ENCODE measurements at regions of chr7 and their contacts with region 1.

Region 1: GRCh38 chr7:80699045-80699638 is 60.7 kb downstream of the CD36 start:
- DNase-seq: no peak
- H3K4me3 ChIP-seq: no peak overlapping the region
- H3K27ac ChIP-seq: no peak overlapping the region
- H3K4me1 ChIP-seq: no peaks in the 10 kb centered on the region
- H3K27me3 ChIP-seq: no peaks in the 10 kb centered on the region
- CTCF ChIP-seq: peak in 3 of 4 experiments; percentile 70 to 85 (median 82)
- POLR2A ChIP-seq: no peak

Region 2: GRCh38 chr7:81256991-81257390 is 557.8 kb after region 1 on chr7:
- intact Hi-C with region 1: loop called (anchors 2 kb)
- DNase-seq: no peak
- H3K4me3 ChIP-seq: no peak overlapping the region
- H3K27ac ChIP-seq: no peak overlapping the region
- H3K4me1 ChIP-seq: no peaks in the 10 kb centered on the region
- H3K27me3 ChIP-seq: no peaks in the 10 kb centered on the region
- CTCF ChIP-seq: no peak
- POLR2A ChIP-seq: no peak

Region 3: DNA sequence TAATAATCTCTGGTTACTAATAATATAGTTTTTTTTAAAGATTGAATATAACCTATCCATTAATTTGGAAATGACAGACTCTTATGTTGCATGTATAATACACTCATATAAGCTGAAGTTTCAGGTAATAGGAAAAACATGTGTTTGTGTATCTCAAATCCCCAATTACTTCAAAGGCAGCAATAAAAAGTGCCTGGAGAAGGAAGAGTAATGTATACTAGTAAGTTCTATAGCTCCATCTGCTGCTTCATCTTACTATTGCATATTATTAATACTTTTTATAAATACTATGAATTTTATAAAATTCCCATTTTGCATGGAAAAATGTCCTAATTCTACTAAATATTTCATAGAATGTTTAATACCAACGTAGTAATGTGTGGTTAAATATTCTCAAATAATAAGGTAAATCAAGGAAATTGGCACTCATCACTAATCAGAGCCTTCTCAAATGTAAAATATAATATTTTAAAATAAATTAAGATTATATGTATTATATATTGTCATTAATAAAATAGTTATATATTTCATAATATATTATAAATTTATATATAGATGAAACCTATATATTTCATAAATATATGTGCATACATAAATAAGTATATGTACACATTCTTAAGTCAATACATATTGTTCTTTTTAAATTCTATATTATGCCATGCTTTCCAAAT is 758.8 kb after region 1 on chr7:
- intact Hi-C with region 1: loop called (anchors 5 kb)
- DNase-seq: no peak
- H3K4me3 ChIP-seq: no peak overlapping the region
- H3K27ac ChIP-seq: no peak overlapping the region
- H3K4me1 ChIP-seq: no peaks in the 10 kb centered on the region
- H3K27me3 ChIP-seq: no peaks in the 10 kb centered on the region
- CTCF ChIP-seq: peak in 3 of 4 experiments; percentile 35 to 56 (median 52)
- POLR2A ChIP-seq: no peak

Region 4: GRCh38 chr7:81469869-81470723 is 771.0 kb after region 1 on chr7:
- intact Hi-C with region 1: loop called (anchors 5 kb)
- DNase-seq: peak; percentile 56
- H3K4me3 ChIP-seq: no peak overlapping the region
- H3K27ac ChIP-seq: no peak overlapping the region
- H3K4me1 ChIP-seq: no peaks in the 10 kb centered on the region
- H3K27me3 ChIP-seq: no peaks in the 10 kb centered on the region
- CTCF ChIP-seq: peak; percentile 28 to 73 (median 59)
- POLR2A ChIP-seq: no peak